Sigmoid colon (tissue), 7 donors: ENCODE measurements at regions of chr7 and their contacts with region 1.

Region 1: DNA sequence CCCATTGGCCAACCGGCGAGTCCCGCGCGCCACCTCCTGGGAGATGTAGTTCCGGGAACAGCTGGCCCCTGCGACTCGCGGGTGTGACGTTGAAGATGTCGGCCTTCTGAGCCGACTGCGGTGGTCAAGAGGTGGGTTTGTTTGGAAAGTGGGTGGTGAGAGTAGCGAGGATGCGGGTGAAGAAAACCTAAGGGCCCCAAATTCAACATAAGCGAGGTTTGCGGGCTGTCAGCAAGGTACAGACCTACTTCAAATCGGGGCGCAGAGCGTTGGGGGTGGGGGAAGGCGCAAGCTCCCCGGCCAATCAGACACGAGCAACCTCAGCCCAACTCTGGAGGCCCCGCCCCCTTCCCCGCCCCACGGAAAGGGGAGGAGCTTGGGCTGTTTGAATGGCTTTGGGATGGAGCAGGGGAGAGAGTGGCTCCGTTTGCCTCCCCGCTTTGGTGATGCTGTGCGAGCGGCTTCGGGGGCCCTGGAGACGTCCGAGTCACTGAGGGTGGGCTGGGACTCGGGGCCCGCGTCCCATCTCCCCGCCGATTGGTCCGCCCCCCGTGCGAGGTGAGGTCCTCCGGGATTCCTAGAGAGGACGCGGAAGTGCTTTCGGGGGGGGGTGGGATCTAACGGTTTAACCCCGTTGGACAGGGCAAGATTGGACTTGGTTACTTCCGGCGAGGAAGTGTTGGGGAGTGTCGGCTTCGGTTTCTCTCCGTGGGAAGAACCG is at the start of gene ZKSCAN5:
- DNase-seq: peak; percentile 99
- H3K4me3 ChIP-seq: peak within 1 kb of the TSS; percentile 59 to 81 (median 65)
- H3K27ac ChIP-seq: peak within 1 kb of the TSS; percentile 84 to 95 (median 90)
- H3K4me1 ChIP-seq: peaks cover 0 to 45% (median 35%) of the 10 kb centered on the region in 4 donors
- H3K27me3 ChIP-seq: no peaks in the 10 kb centered on the region
- CTCF ChIP-seq: no peak
- EP300 ChIP-seq: peak in 1 of 4 donors; percentile 31
- POLR2A ChIP-seq: peak; percentile 63 to 66
- total RNA-seq, gene ZKSCAN5: 7.7 to 12.5 (median 8.4) TPM

Region 2: DNA sequence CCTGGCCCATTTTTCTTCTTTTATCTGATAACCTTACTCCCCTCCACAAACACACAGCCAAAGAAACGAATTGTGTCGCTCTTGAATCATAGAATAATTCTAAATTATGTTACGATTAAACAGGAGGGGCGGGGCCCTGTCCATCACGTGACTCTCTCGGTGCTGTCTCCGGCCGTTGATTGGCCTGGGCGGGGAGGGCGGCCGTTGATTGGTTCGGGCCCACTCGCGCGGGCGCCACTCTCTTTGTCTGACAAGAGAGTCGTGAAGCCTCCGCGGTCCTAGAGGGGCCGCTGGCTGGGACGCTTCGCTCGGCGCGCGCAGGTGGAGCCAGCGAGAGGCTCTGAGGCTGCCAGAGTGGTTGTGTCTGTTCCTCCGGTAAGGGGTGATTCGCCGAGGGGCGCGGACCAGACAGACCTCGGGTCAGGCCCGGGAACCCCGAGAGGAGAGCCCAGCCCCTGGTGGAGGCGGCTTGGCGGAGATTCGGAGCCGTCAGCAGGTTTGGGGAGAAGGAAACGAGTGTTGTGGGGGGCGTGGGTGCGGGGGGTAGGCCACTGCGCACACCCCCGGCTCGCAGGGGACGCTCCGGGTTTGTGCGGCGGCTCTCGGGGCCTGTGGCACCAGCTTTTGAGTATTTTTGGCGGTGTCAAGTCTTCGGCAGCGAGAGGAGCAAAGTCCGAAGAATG is 32.1 kb before region 1 on chr7 and contains the start of gene ZNF789:
- intact Hi-C with region 1: loop called (anchors 2 kb)
- DNase-seq: peak; percentile 99
- H3K4me3 ChIP-seq: peak within 1 kb of the TSS; percentile 67 to 94 (median 78)
- H3K27ac ChIP-seq: peak within 1 kb of the TSS; percentile 83 to 94 (median 88)
- H3K4me1 ChIP-seq: peaks cover 0 to 25% (median 10%) of the 10 kb centered on the region in 4 donors
- H3K27me3 ChIP-seq: no peaks in the 10 kb centered on the region
- CTCF ChIP-seq: no peak
- EP300 ChIP-seq: no peak
- POLR2A ChIP-seq: peak in 1 of 2 donors; percentile 26
- total RNA-seq, gene ZNF789: 4.3 to 10.5 (median 7.0) TPM

Region 3: GRCh38 chr7:99558306-99559174 is 53.8 kb after region 1 on chr7 and contains the start of gene ZNF655:
- intact Hi-C with region 1: loop called (anchors 2 kb)
- DNase-seq: peak; percentile 97
- H3K4me3 ChIP-seq: peak within 1 kb of the TSS; percentile 61 to 97 (median 70)
- H3K27ac ChIP-seq: peak within 1 kb of the TSS; percentile 93 to 98 (median 96)
- H3K4me1 ChIP-seq: peaks cover 0 to 49% (median 45%) of the 10 kb centered on the region in 4 donors
- H3K27me3 ChIP-seq: no peaks in the 10 kb centered on the region
- CTCF ChIP-seq: no peak
- EP300 ChIP-seq: no peak
- POLR2A ChIP-seq: peak; percentile 75 to 80
- total RNA-seq, gene ZNF655: 124 to 148 (median 131) TPM

Region 4: DNA sequence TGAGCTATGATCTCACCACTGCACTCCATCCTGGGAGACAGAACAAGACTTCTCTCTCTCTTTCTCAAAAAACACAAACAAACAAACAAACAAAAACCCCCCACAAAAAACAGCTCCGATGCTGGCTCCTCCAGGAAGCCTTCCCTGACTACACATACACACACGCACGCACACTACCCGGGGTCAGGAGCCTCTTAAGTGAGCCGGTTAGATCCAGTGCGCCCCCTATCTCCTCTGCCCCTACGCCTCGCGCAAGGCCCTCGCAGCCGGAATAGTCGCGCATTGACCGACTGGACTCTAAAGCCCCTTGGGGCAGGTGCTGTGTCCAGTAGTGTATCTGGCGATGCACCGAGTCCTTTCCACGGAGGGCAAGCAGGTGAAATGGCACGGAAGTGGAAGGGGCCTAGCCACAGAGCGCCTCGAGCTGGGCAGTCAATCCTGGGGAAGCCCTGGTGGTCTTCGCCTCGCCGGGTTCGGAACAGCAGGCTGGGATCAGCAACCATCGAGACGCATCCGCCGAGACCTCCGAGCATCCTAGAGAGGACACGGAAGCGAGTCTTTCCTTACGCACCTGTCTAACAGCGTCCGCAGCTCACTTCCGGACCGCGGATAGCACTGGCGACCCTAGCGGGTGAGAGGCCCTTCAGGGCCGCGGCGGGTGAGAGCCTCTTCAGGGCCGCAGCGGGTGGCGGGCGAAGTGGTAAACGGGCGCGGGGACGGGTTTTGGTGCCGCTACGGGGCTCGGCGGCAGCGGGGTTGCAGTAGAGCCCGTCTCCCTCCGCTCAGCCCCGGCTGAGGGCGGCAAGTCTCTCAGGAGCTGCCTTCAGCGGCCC is 111.8 kb after region 1 on chr7 and contains the start of gene ZSCAN25:
- intact Hi-C with region 1: loop called (anchors 5 kb)
- DNase-seq: peak; percentile 92
- H3K4me3 ChIP-seq: peak within 1 kb of the TSS; percentile 60 to 95 (median 80)
- H3K27ac ChIP-seq: peak within 1 kb of the TSS; percentile 78 to 90 (median 88)
- H3K4me1 ChIP-seq: peaks cover 0 to 20% (median 12%) of the 10 kb centered on the region in 4 donors
- H3K27me3 ChIP-seq: no peaks in the 10 kb centered on the region
- CTCF ChIP-seq: peak in 1 of 4 experiments; percentile 11
- EP300 ChIP-seq: no peak
- POLR2A ChIP-seq: peak; percentile 40 to 51
- total RNA-seq, gene ZSCAN25: 10.7 to 19.9 (median 14.9) TPM

Region 5: GRCh38 chr7:100015232-100016209 is 510.8 kb after region 1 on chr7 and contains the start of gene ZKSCAN1:
- intact Hi-C with region 1: no loop called
- DNase-seq: peak; percentile 95
- H3K4me3 ChIP-seq: peak within 1 kb of the TSS; percentile 79 to 100 (median 100)
- H3K27ac ChIP-seq: peak within 1 kb of the TSS; percentile 98 to 100 (median 100)
- H3K4me1 ChIP-seq: peaks cover 0 to 50% (median 40%) of the 10 kb centered on the region in 4 donors
- H3K27me3 ChIP-seq: no peaks in the 10 kb centered on the region
- CTCF ChIP-seq: no peak
- EP300 ChIP-seq: no peak
- POLR2A ChIP-seq: peak; percentile 69 to 78
- total RNA-seq, gene ZKSCAN1: 27.8 to 32.7 (median 31.6) TPM

Region 6: DNA sequence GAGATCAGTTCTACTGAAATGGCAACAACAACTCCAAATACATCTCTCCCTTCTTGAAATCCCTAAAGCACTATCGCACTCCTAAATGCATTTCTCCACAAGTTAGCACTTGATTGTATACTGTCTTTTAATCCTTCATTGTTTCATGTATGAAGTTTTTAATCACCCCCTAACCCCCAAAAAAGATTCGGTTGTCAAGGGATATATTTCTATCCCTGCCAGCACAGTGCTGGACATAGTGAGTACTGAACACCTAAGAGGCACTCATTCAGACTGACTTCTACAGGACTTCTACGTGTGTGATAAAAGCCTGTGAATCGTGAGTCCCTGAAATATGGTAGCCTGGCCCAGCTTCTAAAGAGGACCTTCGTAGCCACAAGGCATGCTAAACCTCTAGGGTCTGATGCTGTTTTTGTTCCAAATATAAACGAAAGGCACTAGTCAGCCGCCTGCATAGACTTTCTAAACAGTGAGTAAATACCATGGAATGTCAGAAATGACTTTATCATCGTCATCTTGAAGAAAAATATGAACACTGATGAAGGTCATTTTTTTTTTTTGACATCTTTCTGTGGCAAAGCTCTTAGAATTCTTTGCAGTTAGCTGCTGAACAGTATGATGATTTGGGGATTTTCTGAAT is 530.2 kb after region 1 on chr7:
- intact Hi-C with region 1: no loop called
- DNase-seq: no peak
- H3K4me3 ChIP-seq: no peak overlapping the region
- H3K27ac ChIP-seq: no peak overlapping the region
- H3K4me1 ChIP-seq: peaks cover 0 to 14% (median 0%) of the 10 kb centered on the region in 4 donors
- H3K27me3 ChIP-seq: no peaks in the 10 kb centered on the region
- CTCF ChIP-seq: no peak
- EP300 ChIP-seq: no peak
- POLR2A ChIP-seq: no peak